ENCODE measurements at regions of chr11 and their contacts with region 1.

Region 1: GRCh38 chr11:12281571-12282478 is 95.5 kb upstream of the PARVA start:
- DNase-seq: peak; percentile 84
- ATAC-seq: peak; percentile 79
- H3K4me3 Mint-ChIP-seq: no peak overlapping the region
- H3K27ac Mint-ChIP-seq: no peak overlapping the region
- H3K4me1 Mint-ChIP-seq: peaks cover 5% of the 10 kb centered on the region
- H3K27me3 Mint-ChIP-seq: no peaks in the 10 kb centered on the region
- CTCF ChIP-seq: peak; percentile 97

Region 2: DNA sequence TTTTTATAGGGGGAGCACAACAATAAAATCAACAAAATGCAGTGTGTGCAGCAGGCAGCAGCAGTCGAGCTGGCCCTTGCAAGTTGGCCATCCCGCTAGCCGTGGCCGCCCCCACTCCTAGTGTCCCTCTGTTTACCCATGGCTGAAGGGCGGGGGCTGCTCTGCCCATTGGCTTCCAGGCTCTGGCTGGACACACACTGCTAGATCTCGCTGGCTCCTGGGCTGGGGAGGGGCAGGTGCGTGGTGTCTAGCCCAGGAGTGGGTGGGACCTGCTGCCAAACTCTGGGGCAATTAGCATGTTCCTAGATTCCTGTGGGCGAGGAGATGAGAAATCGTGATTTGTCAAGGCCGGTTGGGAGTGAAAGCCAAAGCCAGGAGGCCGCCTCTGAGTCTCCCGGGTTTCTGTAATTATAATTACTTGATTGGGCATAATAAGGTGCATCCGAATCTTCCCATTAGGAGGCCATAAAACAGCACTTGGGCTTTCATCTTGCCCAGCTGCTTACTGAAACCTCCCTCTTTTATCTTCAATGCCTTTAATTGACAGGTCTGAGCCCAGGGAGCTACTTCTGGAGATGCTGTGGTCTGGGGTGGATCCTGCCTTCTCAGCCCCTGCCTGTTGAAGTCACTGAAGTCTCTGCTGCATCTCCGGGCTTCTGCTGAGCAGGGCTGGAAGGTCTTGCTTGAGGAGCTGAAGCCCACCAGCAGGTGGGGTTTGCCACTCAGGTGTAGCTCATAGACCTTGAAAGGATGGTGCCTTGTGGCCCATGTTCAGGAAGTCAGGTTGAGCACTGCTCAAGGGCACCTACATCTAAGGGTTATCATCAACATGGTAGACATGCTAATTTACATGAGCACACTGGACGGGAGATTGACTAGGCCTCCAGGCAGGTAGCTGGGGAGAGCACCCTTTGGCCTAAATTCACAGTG is 228.9 kb before region 1 on chr11:
- CTCF ChIA-PET with region 1: interaction called, 167 read pairs
- POLR2A ChIA-PET with region 1: no interaction called
- intact Hi-C with region 1: no loop called
- DNase-seq: peak; percentile 58
- ATAC-seq: peak; percentile 71
- H3K4me3 Mint-ChIP-seq: no peak overlapping the region
- H3K27ac Mint-ChIP-seq: no peak overlapping the region
- H3K4me1 Mint-ChIP-seq: no peaks in the 10 kb centered on the region
- H3K27me3 Mint-ChIP-seq: no peaks in the 10 kb centered on the region
- CTCF ChIP-seq: no peak

Region 3: GRCh38 chr11:12087075-12088004 is 194.5 kb before region 1 on chr11:
- CTCF ChIA-PET with region 1: interaction called, 30 read pairs
- POLR2A ChIA-PET with region 1: no interaction called
- intact Hi-C with region 1: no loop called
- DNase-seq: peak; percentile 69
- ATAC-seq: peak; percentile 86
- H3K4me3 Mint-ChIP-seq: no peak overlapping the region
- H3K27ac Mint-ChIP-seq: peak overlapping the region; percentile 75
- H3K4me1 Mint-ChIP-seq: peaks cover 60% of the 10 kb centered on the region
- H3K27me3 Mint-ChIP-seq: no peaks in the 10 kb centered on the region
- CTCF ChIP-seq: no peak

Region 4: GRCh38 chr11:12137007-12137690 is 144.7 kb before region 1 on chr11:
- CTCF ChIA-PET with region 1: interaction called, 10 read pairs
- POLR2A ChIA-PET with region 1: no interaction called
- intact Hi-C with region 1: no loop called
- DNase-seq: no peak
- ATAC-seq: no peak
- H3K4me3 Mint-ChIP-seq: no peak overlapping the region
- H3K27ac Mint-ChIP-seq: no peak overlapping the region
- H3K4me1 Mint-ChIP-seq: peaks cover 44% of the 10 kb centered on the region
- H3K27me3 Mint-ChIP-seq: no peaks in the 10 kb centered on the region
- CTCF ChIP-seq: no peak

Region 5: GRCh38 chr11:12224537-12224893 is 57.3 kb before region 1 on chr11:
- CTCF ChIA-PET with region 1: interaction called, 17 read pairs
- POLR2A ChIA-PET with region 1: no interaction called
- intact Hi-C with region 1: no loop called
- DNase-seq: peak; percentile 99
- ATAC-seq: peak; percentile 96
- H3K4me3 Mint-ChIP-seq: peak overlapping the region; percentile 68
- H3K27ac Mint-ChIP-seq: peak overlapping the region; percentile 94
- H3K4me1 Mint-ChIP-seq: peaks cover 46% of the 10 kb centered on the region
- H3K27me3 Mint-ChIP-seq: no peaks in the 10 kb centered on the region
- CTCF ChIP-seq: no peak

Region 6: DNA sequence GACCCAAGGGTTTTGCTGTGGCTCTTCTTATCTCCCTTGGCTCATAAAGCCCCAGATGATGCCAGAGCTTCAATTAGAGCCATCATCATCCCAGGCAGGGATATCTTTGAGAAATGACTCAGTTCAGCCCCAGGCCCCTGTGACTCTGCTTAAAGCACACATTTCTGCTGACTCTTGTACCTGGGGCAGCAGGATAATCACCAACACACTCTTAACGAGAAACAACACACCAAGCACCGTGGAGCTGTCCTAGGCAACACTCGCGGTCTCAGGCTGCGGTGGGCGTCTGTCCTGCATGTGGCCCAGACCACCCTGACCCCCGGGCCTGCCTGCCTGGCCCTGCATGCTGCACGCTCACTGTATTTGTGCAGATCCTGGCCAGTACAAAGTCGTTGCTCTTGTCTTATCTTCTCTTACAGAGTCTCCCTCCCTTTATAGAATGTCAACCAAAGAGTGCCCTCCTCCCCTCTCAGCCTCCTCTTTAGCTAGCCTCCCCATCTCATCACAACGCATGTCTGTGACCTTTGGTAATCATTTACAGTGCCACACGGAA is 18.6 kb before region 1 on chr11:
- CTCF ChIA-PET with region 1: interaction called, 13 read pairs
- POLR2A ChIA-PET with region 1: interaction called, 3 read pairs
- intact Hi-C with region 1: no loop called
- DNase-seq: no peak
- ATAC-seq: no peak
- H3K4me3 Mint-ChIP-seq: no peak overlapping the region
- H3K27ac Mint-ChIP-seq: no peak overlapping the region
- H3K4me1 Mint-ChIP-seq: no peaks in the 10 kb centered on the region
- H3K27me3 Mint-ChIP-seq: no peaks in the 10 kb centered on the region
- CTCF ChIP-seq: no peak